ENCODE measurements at regions of chr22 and their contacts with region 1.

Region 1: GRCh38 chr22:20916983-20917810 is at the start of gene CRKL:
- DNase-seq: peak; percentile 97
- H3K4me3 ChIP-seq: peak within 1 kb of the TSS; percentile 69 to 100 (median 97)
- H3K27ac ChIP-seq: peak within 1 kb of the TSS; percentile 56
- H3K4me1 ChIP-seq: peaks cover 6% of the 10 kb centered on the region
- H3K27me3 ChIP-seq: no peaks in the 10 kb centered on the region
- CTCF ChIP-seq: peak; percentile 96 to 100
- POLR2A ChIP-seq: peak; percentile 80
- total RNA-seq, gene CRKL: 47.1 and 50.6 TPM in 2 replicates

Region 2: GRCh38 chr22:20858615-20859416 is 58.4 kb before region 1 on chr22 and contains the starts of genes PI4KA and SNAP29:
- CTCF ChIA-PET with region 1: no interaction called
- POLR2A ChIA-PET with region 1: no interaction called
- dilution Hi-C with region 1: no loop called
- intact Hi-C with region 1: loop called (anchors 1 kb)
- DNase-seq: peak; percentile 97
- H3K4me3 ChIP-seq: peak within 1 kb of the TSS; percentile 69 to 89 (median 79)
- H3K27ac ChIP-seq: peak within 1 kb of the TSS; percentile 50
- H3K4me1 ChIP-seq: peaks cover 17% of the 10 kb centered on the region
- H3K27me3 ChIP-seq: no peaks in the 10 kb centered on the region
- CTCF ChIP-seq: no peak
- POLR2A ChIP-seq: no peak
- total RNA-seq, gene PI4KA: 51.4 and 56.4 TPM in 2 replicates
- total RNA-seq, gene SNAP29: 26.7 and 27.0 TPM in 2 replicates

Region 3: DNA sequence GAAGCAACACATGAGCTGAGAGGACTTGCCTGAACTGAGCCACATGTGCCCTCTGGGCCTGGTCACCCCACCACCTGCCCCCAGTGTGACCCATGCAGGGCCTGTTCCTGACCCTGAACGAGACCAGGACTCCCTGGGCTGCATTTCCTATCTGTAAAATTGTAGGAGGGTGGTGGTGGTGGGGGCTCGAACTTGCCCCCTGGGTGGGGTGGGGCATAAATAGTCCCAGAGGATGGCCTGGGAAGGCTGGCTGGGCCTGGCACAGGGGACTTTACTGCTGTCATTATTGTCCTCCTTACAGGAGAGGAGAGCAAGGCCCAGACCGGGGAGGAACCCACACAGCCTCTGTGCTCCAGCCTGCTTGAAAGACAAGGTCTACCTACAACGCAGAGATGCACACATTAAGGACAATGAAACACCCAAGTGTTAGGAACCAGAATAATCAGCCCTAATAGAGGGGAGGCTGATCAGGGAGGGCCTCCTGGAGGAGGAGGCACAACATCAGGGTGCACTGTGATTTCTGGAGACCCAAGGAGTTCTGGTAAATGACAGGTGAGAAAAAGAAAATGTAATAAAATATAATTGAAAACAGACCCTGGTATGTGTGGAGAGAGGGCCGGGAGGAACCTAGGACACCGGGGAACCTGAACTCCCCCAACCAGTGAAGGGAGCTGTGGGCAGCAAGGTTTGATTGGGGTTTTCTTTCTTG is 47.0 kb after region 1 on chr22:
- CTCF ChIA-PET with region 1: no interaction called
- POLR2A ChIA-PET with region 1: no interaction called
- dilution Hi-C with region 1: no loop called
- intact Hi-C with region 1: loop called (anchors 5 kb)
- DNase-seq: no peak
- H3K4me3 ChIP-seq: no peak overlapping the region
- H3K27ac ChIP-seq: no peak overlapping the region
- H3K4me1 ChIP-seq: no peaks in the 10 kb centered on the region
- H3K27me3 ChIP-seq: peaks cover 4 to 18% of the 10 kb centered on the region in 2 experiments
- CTCF ChIP-seq: no peak
- POLR2A ChIP-seq: no peak

Region 4: GRCh38 chr22:21001560-21002325 is 84.5 kb after region 1 on chr22 and contains the start of gene THAP7:
- CTCF ChIA-PET with region 1: no interaction called
- POLR2A ChIA-PET with region 1: no interaction called
- dilution Hi-C with region 1: no loop called
- intact Hi-C with region 1: loop called (anchors 2 kb)
- DNase-seq: peak; percentile 95
- H3K4me3 ChIP-seq: peak within 1 kb of the TSS; percentile 77 to 86 (median 86)
- H3K27ac ChIP-seq: peak within 1 kb of the TSS; percentile 88
- H3K4me1 ChIP-seq: peaks cover 22% of the 10 kb centered on the region
- H3K27me3 ChIP-seq: no peaks in the 10 kb centered on the region
- CTCF ChIP-seq: no peak
- POLR2A ChIP-seq: peak; percentile 85
- total RNA-seq, gene THAP7: 13.5 and 14.9 TPM in 2 replicates

Measured in endothelial cell of umbilical vein (primary cell).